HCT116 (cell line): ENCODE measurements at regions of chr6 and their contacts with region 1.

Region 1: GRCh38 chr6:112780498-112781096 is 433.5 kb downstream of the RFPL4B start:
- DNase-seq: peak; percentile 75
- ATAC-seq: peak; percentile 99
- H3K4me3 ChIP-seq: no peak overlapping the region
- H3K27ac ChIP-seq: no peak overlapping the region
- H3K4me1 ChIP-seq: no peaks in the 10 kb centered on the region
- H3K27me3 ChIP-seq: no peaks in the 10 kb centered on the region
- CTCF ChIP-seq: peak; percentile 73 to 83 (median 76)
- POLR2A ChIP-seq: no peak
- RAD21 ChIP-seq: peak; percentile 88

Region 2: DNA sequence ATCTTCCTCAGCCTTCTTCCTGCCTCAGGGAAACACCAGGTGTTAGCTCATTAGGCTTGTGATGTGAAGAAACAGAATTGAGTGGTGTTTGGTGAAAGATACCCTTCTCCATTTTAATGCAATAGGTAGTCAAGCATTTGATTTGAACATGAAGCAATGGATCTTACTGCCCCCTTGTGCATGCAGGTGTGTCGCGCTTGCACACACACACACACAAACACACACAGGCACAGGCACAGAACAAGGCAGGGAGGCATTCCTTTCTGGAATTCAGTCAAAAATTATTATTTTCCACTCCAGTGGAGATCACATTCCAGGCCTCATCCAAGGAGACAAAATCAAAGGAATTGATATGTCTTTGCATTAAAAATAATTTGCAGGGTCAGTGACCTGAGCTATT is 409.6 kb after region 1 on chr6:
- CTCF ChIA-PET with region 1: no interaction called
- POLR2A ChIA-PET with region 1: no interaction called
- RAD21 ChIA-PET with region 1: no interaction called
- intact Hi-C with region 1: loop called (anchors 10 kb)
- DNase-seq: peak; percentile 8
- ATAC-seq: peak; percentile 67; the same call in 1 of the 2 replicates
- H3K4me3 ChIP-seq: no peak overlapping the region
- H3K27ac ChIP-seq: no peak overlapping the region
- H3K4me1 ChIP-seq: no peaks in the 10 kb centered on the region
- H3K27me3 ChIP-seq: no peaks in the 10 kb centered on the region
- CTCF ChIP-seq: peak in 2 of 3 experiments; percentile 36 to 37; a peak in 4 of 6 replicates
- POLR2A ChIP-seq: no peak
- RAD21 ChIP-seq: peak; percentile 55

Region 3: GRCh38 chr6:113306552-113307145 is 526.1 kb after region 1 on chr6:
- CTCF ChIA-PET with region 1: interaction called, 4 read pairs
- POLR2A ChIA-PET with region 1: no interaction called
- RAD21 ChIA-PET with region 1: no interaction called
- intact Hi-C with region 1: loop called (anchors 5 kb)
- DNase-seq: peak; percentile 56
- ATAC-seq: peak; percentile 99
- H3K4me3 ChIP-seq: no peak overlapping the region
- H3K27ac ChIP-seq: no peak overlapping the region
- H3K4me1 ChIP-seq: peaks cover 0 to 9% of the 10 kb centered on the region in 2 experiments; a peak in 2 of 4 replicates
- H3K27me3 ChIP-seq: no peaks in the 10 kb centered on the region
- CTCF ChIP-seq: peak; percentile 55 to 91 (median 84); a peak in 5 of 6 replicates
- POLR2A ChIP-seq: no peak
- RAD21 ChIP-seq: peak; percentile 73

Region 4: DNA sequence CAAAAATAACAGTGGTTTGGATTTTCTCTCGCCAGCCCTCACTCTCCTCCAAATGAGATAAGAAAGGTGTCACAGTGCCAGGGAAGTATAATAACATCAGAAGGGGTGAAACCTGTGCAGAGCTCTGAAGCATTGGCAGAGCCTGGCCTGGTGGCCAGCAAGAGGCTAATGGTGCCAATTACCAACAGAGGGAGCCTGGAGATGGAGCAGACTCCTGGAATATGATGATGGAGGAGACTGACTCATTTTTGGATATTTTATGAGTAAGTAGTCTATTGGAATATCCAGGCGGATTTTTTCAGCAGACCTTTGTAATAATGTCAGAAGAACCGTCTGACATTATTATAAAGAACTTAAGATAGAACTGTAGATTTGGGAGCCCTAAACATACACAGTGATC is 633.9 kb after region 1 on chr6:
- CTCF ChIA-PET with region 1: no interaction called
- POLR2A ChIA-PET with region 1: no interaction called
- RAD21 ChIA-PET with region 1: no interaction called
- intact Hi-C with region 1: loop called (anchors 5 kb)
- DNase-seq: peak; percentile 57
- ATAC-seq: peak; percentile 100
- H3K4me3 ChIP-seq: no peak overlapping the region
- H3K27ac ChIP-seq: no peak overlapping the region
- H3K4me1 ChIP-seq: peaks cover 6 to 29% of the 10 kb centered on the region in 2 experiments; a peak in 3 of 4 replicates
- H3K27me3 ChIP-seq: no peaks in the 10 kb centered on the region
- CTCF ChIP-seq: peak; percentile 50 to 66 (median 61); a peak in 5 of 6 replicates
- POLR2A ChIP-seq: no peak
- RAD21 ChIP-seq: peak; percentile 74

Region 5: GRCh38 chr6:113879186-113880096 is 1098.8 kb after region 1 on chr6:
- CTCF ChIA-PET with region 1: interaction called, 6 read pairs
- POLR2A ChIA-PET with region 1: no interaction called
- RAD21 ChIA-PET with region 1: no interaction called
- intact Hi-C with region 1: loop called (anchors 1 kb)
- DNase-seq: peak; percentile 68
- ATAC-seq: peak; percentile 100
- H3K4me3 ChIP-seq: no peak overlapping the region
- H3K27ac ChIP-seq: no peak overlapping the region
- H3K4me1 ChIP-seq: peaks cover 0 to 7% of the 10 kb centered on the region in 2 experiments; a peak in 3 of 4 replicates
- H3K27me3 ChIP-seq: no peaks in the 10 kb centered on the region
- CTCF ChIP-seq: peak; percentile 42 to 81 (median 71); a peak in 5 of 6 replicates
- POLR2A ChIP-seq: no peak
- RAD21 ChIP-seq: peak; percentile 88

Region 6: GRCh38 chr6:113909234-113909856 is 1128.7 kb after region 1 on chr6:
- CTCF ChIA-PET with region 1: interaction called, 6 read pairs
- POLR2A ChIA-PET with region 1: no interaction called
- RAD21 ChIA-PET with region 1: no interaction called
- intact Hi-C with region 1: loop called (anchors 1 kb)
- DNase-seq: peak; percentile 36
- ATAC-seq: peak; percentile 65
- H3K4me3 ChIP-seq: no peak overlapping the region
- H3K27ac ChIP-seq: no peak overlapping the region
- H3K4me1 ChIP-seq: no peaks in the 10 kb centered on the region
- H3K27me3 ChIP-seq: no peaks in the 10 kb centered on the region
- CTCF ChIP-seq: peak; percentile 26 to 75 (median 54); a peak in 4 of 6 replicates
- POLR2A ChIP-seq: no peak
- RAD21 ChIP-seq: peak; percentile 81

Region 7: GRCh38 chr6:113936093-113936934 is 1155.7 kb after region 1 on chr6:
- CTCF ChIA-PET with region 1: no interaction called
- POLR2A ChIA-PET with region 1: no interaction called
- RAD21 ChIA-PET with region 1: no interaction called
- intact Hi-C with region 1: loop called (anchors 2 kb)
- DNase-seq: peak; percentile 33
- ATAC-seq: peak; percentile 86
- H3K4me3 ChIP-seq: no peak overlapping the region
- H3K27ac ChIP-seq: no peak overlapping the region
- H3K4me1 ChIP-seq: no peaks in the 10 kb centered on the region
- H3K27me3 ChIP-seq: no peaks in the 10 kb centered on the region
- CTCF ChIP-seq: peak; percentile 53 to 80 (median 66); a peak in 5 of 6 replicates
- POLR2A ChIP-seq: no peak
- RAD21 ChIP-seq: peak; percentile 55